ENCODE measurements at regions of chr19 and their contacts with region 1.

Region 1: GRCh38 chr19:33280351-33280921 is 21.9 kb downstream of the CEBPA start:
- H3K4me3 Mint-ChIP-seq: peak overlapping the region; percentile 17
- H3K27ac Mint-ChIP-seq: peak overlapping the region; percentile 80
- H3K4me1 Mint-ChIP-seq: peaks cover 90% of the 10 kb centered on the region
- H3K27me3 Mint-ChIP-seq: no peaks in the 10 kb centered on the region

Region 2: GRCh38 chr19:33268162-33268991 is 12.1 kb before region 1 on chr19:
- intact Hi-C with region 1: loop called (anchors 2 kb)
- H3K4me3 Mint-ChIP-seq: peak overlapping the region; percentile 61
- H3K27ac Mint-ChIP-seq: peak overlapping the region; percentile 99
- H3K4me1 Mint-ChIP-seq: peaks cover 94% of the 10 kb centered on the region
- H3K27me3 Mint-ChIP-seq: no peaks in the 10 kb centered on the region

Measured in dendritic cell treated with granulocyte-macrophage colony-stimulating factor and Interleukin-4, amounts not matched to agents 40 ng/mL and 50 ng/mL, for 4 days (primary cell).